ENCODE measurements at regions of chr20 and their contacts with region 1.

Region 1: GRCh38 chr20:37534401-37535157 is 6.9 kb upstream of the BLCAP start:
- DNase-seq: peak; percentile 45
- H3K4me3 Mint-ChIP-seq: no peak overlapping the region
- H3K27ac Mint-ChIP-seq: no peak overlapping the region
- H3K4me1 Mint-ChIP-seq: peaks cover 3% of the 10 kb centered on the region
- H3K27me3 Mint-ChIP-seq: peaks cover 14% of the 10 kb centered on the region

Region 2: DNA sequence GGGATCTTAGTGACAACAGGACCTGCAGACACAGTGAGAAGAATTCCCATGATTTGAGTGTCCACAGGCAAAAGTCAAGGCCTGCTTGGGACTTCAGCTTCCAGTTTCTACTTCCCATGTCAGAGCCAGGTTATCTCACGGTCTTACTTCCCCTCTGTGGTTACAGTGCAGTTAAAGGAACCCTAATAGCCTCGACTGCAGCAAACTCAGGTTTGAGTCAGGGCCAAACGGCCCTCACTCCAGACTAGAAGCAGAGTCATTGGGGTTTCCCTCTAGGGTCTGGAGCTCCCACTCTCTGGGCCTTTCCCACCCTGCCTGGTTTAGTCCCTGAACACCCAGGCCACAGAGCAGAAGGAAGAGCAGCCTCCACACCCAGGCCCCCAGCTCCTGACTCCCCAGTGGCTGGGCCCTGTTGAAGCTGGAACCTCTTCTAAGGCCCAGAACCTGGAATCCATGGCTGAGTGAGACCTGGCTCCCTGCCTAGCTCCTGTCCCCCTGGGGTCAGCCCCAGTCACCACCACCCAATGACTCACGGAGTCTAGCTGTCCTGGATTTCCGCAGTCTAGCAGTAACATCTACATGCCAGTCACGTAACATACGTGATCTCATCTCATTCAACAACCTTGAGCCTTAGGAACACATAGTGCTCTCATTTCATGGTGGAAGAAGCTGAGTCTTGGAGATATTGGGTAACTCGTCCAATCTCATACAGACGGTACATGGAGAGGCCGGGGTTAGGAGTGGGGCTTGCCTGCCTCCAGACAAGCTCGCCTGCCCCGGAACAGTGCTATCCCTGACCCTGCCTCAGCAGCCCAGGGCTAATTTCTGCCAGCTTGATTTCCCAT is 263.8 kb before region 1 on chr20:
- CTCF ChIA-PET with region 1: interaction called, 14 read pairs
- POLR2A ChIA-PET with region 1: no interaction called
- DNase-seq: no peak
- H3K4me3 Mint-ChIP-seq: no peak overlapping the region
- H3K27ac Mint-ChIP-seq: no peak overlapping the region
- H3K4me1 Mint-ChIP-seq: peaks cover 1% of the 10 kb centered on the region
- H3K27me3 Mint-ChIP-seq: peaks cover 2% of the 10 kb centered on the region